ENCODE measurements at regions of chrX and their contacts with region 1.

Region 1: GRCh38 chrX:45186643-45187026 is 14.0 kb downstream of the DIPK2B start:
- DNase-seq: no peak
- H3K4me3 ChIP-seq: no peak overlapping the region
- H3K27ac ChIP-seq: no peak overlapping the region
- H3K4me1 ChIP-seq: no peaks in the 10 kb centered on the region
- H3K27me3 ChIP-seq: no peaks in the 10 kb centered on the region
- CTCF ChIP-seq: no peak

Region 2: GRCh38 chrX:43836435-43837184 is 1350.0 kb before region 1 on chrX:
- CTCF ChIA-PET with region 1: no interaction called
- dilution Hi-C with region 1: no loop called
- in situ Hi-C with region 1: no loop called
- intact Hi-C with region 1: loop called (anchors 5 kb)
- DNase-seq: peak; percentile 14
- H3K4me3 ChIP-seq: no peak overlapping the region
- H3K27ac ChIP-seq: no peak overlapping the region
- H3K4me1 ChIP-seq: no peaks in the 10 kb centered on the region
- H3K27me3 ChIP-seq: peaks cover 1% of the 10 kb centered on the region
- CTCF ChIP-seq: peak; percentile 58 to 62

Region 3: GRCh38 chrX:46408553-46409407 is 1222.1 kb after region 1 on chrX:
- CTCF ChIA-PET with region 1: no interaction called
- dilution Hi-C with region 1: no loop called
- in situ Hi-C with region 1: no loop called
- intact Hi-C with region 1: loop called (anchors 1 kb)
- DNase-seq: peak; percentile 39
- H3K4me3 ChIP-seq: no peak overlapping the region
- H3K27ac ChIP-seq: no peak overlapping the region
- H3K4me1 ChIP-seq: peaks cover 5% of the 10 kb centered on the region
- H3K27me3 ChIP-seq: no peaks in the 10 kb centered on the region
- CTCF ChIP-seq: peak; percentile 88 to 92